ENCODE measurements at regions of chr10 and their contacts with region 1.

Region 1: DNA sequence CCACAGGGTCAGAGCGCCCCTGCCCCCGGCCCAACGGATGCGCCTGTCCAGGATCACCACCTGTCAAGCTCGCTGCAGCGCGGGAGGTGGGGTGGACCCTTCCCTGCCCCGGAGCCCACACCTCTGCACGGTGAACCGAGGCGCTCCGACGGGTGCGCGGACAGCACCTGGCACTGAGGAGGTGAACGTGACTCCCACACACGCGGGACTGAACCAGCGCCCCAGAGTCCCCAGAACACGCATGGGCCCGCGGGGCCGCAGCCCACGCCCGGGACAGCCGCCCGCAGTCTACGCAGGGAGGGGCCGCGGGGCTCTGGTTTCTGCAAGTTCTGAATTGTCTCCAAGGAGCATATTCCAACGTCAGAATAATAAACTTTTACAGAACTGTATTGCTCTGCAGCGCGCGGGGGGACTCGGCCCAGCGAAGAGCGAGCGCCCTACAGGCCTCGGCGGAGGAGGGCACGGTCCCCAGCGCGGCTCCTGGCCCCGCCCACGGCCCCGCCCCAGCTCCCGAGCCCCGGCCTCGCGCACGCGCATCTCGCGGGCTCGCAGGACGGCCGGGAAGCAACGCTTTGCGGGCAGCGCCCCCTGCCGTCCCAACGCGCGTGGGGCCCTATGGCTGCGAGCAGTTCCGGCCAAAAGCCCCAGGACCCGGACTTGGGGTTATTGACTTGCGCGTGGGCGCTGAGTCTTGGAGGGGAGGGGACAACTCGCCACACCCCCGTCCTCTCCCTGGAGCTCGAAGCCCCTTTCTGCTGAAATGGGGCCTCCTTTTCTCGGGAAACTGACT is 29.7 kb downstream of the OAT start:
- DNase-seq: peak; percentile 96
- ATAC-seq: peak; percentile 99
- H3K4me3 Mint-ChIP-seq: peak overlapping the region; percentile 15
- H3K27ac Mint-ChIP-seq: no peak overlapping the region
- H3K4me1 Mint-ChIP-seq: no peaks in the 10 kb centered on the region
- H3K27me3 Mint-ChIP-seq: peaks cover 2% of the 10 kb centered on the region

Region 2: DNA sequence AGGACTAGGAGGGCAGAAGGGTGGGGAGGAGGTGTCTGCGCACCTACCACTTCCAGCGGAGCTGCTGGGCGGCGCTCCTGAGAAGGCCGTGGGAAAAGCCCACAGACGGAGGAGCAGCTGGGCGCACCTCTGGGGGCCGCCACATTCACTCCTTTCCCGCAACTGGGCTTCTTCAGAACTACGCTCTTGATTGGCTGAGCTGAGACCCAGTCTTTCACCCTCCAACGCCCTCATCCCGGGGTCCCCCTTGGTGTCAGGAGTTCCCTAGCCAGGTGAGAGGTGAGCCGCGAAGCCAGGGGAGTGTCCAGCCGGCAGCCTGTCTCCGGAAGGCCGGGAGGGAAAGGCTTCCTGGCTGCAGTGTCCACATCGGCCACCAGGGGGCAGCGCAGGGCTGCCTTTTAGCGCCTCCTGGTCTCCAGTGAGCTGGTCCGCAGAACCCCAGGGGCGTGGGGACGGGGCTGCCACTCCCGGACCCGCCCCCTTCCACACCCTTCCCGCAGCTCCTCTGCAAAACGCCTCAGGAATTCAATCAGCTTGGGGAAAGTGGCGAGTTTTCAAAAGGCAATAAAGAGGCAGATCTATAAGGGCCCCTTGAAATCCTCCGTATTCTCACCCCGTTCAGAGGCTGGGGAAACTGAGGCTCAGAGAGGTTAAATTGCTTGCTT is 394.5 kb before region 1 on chr10:
- CTCF ChIA-PET with region 1: interaction called, 105 read pairs
- POLR2A ChIA-PET with region 1: no interaction called
- intact Hi-C with region 1: loop called (anchors 1 kb)
- DNase-seq: peak; percentile 88
- ATAC-seq: peak; percentile 77
- H3K4me3 Mint-ChIP-seq: peak overlapping the region; percentile 12
- H3K27ac Mint-ChIP-seq: no peak overlapping the region
- H3K4me1 Mint-ChIP-seq: peaks cover 7% of the 10 kb centered on the region
- H3K27me3 Mint-ChIP-seq: peaks cover 44% of the 10 kb centered on the region

Region 3: DNA sequence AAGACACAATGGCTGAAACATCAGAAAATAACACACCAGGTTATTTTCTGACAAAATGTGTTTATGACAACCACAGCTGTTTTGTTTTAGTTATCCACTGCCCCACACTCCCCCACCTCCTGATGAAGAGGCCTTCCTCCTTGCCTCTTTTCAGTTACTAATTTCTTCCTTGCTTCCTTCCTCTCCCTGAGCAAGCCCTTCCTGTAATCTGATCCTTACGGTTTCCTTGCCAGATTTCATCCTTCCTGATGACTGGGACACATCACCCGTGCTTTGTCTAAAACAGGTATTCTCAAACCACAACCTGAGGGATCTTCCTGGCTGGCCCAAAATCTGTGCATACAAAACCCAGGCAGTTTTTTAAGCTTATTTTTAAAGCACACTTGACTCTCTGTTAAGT is 335.0 kb before region 1 on chr10:
- CTCF ChIA-PET with region 1: no interaction called
- POLR2A ChIA-PET with region 1: no interaction called
- intact Hi-C with region 1: no loop called
- DNase-seq: no peak
- ATAC-seq: no peak
- H3K4me3 Mint-ChIP-seq: no peak overlapping the region
- H3K27ac Mint-ChIP-seq: no peak overlapping the region
- H3K4me1 Mint-ChIP-seq: no peaks in the 10 kb centered on the region
- H3K27me3 Mint-ChIP-seq: no peaks in the 10 kb centered on the region

Region 4: DNA sequence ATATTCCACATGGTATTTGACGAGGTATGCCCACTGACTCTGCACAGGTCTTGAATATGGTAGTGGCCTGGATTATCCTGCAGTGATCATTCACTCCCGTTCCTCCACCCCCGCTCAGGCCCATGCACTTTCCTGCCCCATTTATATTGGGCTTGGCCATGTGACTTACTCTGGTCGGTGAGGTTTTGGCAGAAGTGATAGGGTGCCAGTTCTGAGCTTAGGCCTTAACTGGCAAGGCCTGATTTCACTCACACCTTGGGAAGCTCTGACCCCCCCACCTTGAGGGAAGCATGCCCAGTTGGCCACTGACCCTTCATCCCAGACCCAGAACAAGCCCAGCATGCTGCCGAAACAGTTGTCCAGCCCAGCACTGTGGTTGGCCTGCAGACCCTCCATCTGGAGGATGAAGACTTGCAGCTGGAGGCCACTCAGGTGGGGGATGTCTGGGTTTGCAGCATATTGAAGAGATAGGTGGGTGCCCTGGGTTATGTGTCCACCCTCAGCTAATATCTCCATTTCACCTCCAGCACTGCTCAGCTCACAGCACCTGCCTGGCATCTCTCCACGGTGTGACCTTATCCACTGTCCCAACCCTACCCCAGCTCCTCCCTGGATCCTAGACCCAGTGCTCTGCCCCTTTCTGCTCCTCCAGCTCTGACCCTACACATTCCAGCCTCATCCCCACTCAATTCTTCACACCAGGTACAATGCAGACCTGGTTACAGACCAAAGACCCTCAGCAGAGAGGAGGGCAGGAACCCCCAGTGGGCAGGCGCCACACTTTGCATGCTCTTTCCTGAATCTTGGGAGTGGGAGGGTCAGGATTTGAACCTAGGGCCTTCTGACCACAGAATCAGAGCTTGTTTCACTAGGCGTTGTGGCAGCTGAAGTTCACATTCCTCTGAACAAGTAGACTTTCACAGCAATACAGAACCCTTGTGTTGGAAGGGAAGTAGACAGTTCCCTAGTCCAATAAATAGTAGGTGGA is 157.6 kb before region 1 on chr10:
- CTCF ChIA-PET with region 1: interaction called, 5 read pairs
- POLR2A ChIA-PET with region 1: no interaction called
- intact Hi-C with region 1: loop called in 1 of 2 experiments (anchors 2 kb)
- DNase-seq: peak; percentile 85
- ATAC-seq: peak; percentile 65
- H3K4me3 Mint-ChIP-seq: peak overlapping the region; percentile 31
- H3K27ac Mint-ChIP-seq: no peak overlapping the region
- H3K4me1 Mint-ChIP-seq: no peaks in the 10 kb centered on the region
- H3K27me3 Mint-ChIP-seq: no peaks in the 10 kb centered on the region

Region 5: DNA sequence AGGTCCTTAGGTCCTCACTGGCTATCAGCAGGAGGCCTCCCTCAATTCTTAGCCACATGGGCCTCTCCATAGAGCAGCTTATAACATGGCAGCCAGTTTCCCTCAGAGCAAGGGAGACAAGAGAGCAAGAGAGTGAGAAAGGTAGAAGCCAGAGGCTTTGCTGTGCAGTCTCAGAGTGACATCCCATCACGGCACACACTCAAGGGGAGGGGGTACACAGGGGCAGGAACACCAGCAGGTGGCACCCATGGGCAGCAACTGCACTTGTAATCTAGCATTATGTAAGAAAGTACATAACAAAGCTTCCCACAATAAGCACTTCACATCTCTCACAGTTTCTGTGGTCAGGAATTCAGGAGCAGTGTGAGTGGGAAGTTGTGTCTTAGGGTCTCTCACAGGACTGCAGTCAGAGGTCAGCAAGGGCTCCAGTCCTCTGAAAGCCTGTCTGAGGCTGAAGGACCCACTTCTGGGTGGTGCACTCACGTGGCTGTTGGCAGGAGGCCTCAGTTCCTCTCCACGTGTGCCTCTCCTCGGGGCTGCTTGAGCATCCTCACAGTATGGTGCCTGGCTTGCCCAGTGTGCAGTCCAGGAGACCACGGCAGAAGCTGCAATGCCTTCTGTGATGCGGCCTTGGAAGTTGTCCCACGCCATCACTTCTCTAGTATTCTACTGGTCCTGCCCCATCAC is 129.7 kb before region 1 on chr10:
- CTCF ChIA-PET with region 1: interaction called, 7 read pairs
- POLR2A ChIA-PET with region 1: no interaction called
- intact Hi-C with region 1: loop called (anchors 1 to 10 kb)
- DNase-seq: peak; percentile 46
- ATAC-seq: no peak
- H3K4me3 Mint-ChIP-seq: no peak overlapping the region
- H3K27ac Mint-ChIP-seq: no peak overlapping the region
- H3K4me1 Mint-ChIP-seq: no peaks in the 10 kb centered on the region
- H3K27me3 Mint-ChIP-seq: no peaks in the 10 kb centered on the region

Region 6: GRCh38 chr10:124354411-124355382 is 34.3 kb before region 1 on chr10:
- CTCF ChIA-PET with region 1: interaction called, 7 read pairs
- POLR2A ChIA-PET with region 1: no interaction called
- intact Hi-C with region 1: loop called in 1 of 2 experiments (anchors 1 kb)
- DNase-seq: peak; percentile 69
- ATAC-seq: peak; percentile 98
- H3K4me3 Mint-ChIP-seq: peak overlapping the region; percentile 75
- H3K27ac Mint-ChIP-seq: peak overlapping the region; percentile 88
- H3K4me1 Mint-ChIP-seq: peaks cover 13% of the 10 kb centered on the region
- H3K27me3 Mint-ChIP-seq: no peaks in the 10 kb centered on the region

Region 7: GRCh38 chr10:124403548-124403947 is 14.5 kb after region 1 on chr10:
- CTCF ChIA-PET with region 1: interaction called, 28 read pairs
- POLR2A ChIA-PET with region 1: no interaction called
- intact Hi-C with region 1: loop called (anchors 1 kb)
- DNase-seq: peak; percentile 27
- ATAC-seq: peak; percentile 100
- H3K4me3 Mint-ChIP-seq: no peak overlapping the region
- H3K27ac Mint-ChIP-seq: peak overlapping the region; percentile 16
- H3K4me1 Mint-ChIP-seq: peaks cover 8% of the 10 kb centered on the region
- H3K27me3 Mint-ChIP-seq: no peaks in the 10 kb centered on the region

Region 8: DNA sequence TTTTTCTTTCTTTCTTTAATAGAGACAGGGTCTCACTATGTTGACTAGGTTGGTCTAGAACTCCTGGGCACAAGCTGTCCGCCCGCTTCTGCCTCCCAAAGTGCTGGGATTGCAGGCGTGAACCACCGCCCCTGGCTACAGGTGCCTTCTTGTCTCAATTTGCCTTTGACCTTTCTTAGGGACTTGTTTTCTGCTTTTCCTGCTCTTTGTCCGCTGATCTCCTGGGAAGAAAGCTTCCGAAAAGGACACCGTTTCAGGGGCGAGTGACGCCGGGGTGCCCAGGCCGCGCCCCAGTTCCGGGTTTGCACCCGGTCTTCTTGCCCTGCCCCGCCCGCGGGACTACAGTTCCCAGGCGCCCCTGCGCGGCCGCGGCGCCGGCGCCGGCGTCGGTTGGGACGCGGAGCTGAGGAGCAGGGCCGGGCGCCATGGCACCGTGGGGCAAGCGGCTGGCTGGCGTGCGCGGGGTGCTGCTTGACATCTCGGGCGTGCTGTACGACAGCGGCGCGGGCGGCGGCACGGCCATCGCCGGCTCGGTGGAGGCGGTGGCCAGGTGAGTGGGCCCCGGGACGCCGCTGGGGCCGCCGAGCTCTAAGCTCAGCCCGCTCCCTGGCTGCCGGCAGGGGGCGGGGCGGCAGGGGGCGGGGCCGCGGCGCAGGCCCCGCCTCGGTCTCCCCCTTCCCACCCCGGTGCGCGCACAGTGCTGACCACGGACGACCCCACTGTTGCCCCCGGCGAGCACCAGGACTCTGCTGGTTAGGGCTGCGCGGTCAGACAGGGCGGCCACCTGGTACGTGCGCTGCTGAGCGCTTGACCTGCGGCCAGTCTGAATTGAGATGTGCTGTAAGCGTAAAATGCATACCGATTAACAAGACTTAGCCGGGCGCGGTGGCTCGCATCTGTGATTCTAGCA is 72.7 kb after region 1 on chr10 and contains the start of gene LHPP:
- CTCF ChIA-PET with region 1: interaction called, 4 read pairs
- POLR2A ChIA-PET with region 1: no interaction called
- intact Hi-C with region 1: loop called in 1 of 2 experiments (anchors 1 kb)
- DNase-seq: peak; percentile 92
- ATAC-seq: peak; percentile 97
- H3K4me3 Mint-ChIP-seq: peak within 1 kb of the TSS; percentile 71
- H3K27ac Mint-ChIP-seq: peak within 1 kb of the TSS; percentile 96
- H3K4me1 Mint-ChIP-seq: peaks cover 25% of the 10 kb centered on the region
- H3K27me3 Mint-ChIP-seq: peaks cover 2% of the 10 kb centered on the region
- total RNA-seq, gene LHPP: 11.5 to 14.0 TPM